Activated CD4-positive, alpha-beta T cell treated with anti-CD3 and anti-CD28 coated beads for 36 hours (primary cell): ENCODE measurements at regions of chr17 and their contacts with region 1.

Region 1: GRCh38 chr17:781805-782731 is at the starts of genes GLOD4 and MRM3:
- DNase-seq: peak; percentile 96
- ATAC-seq: peak; percentile 89
- H3K4me3 Mint-ChIP-seq: peak within 1 kb of the TSS; percentile 97
- H3K27ac Mint-ChIP-seq: peak within 1 kb of the TSS; percentile 96
- H3K4me1 Mint-ChIP-seq: peaks cover 35% of the 10 kb centered on the region
- H3K27me3 Mint-ChIP-seq: no peaks in the 10 kb centered on the region
- total RNA-seq, gene GLOD4: 59.5 to 64.0 TPM
- total RNA-seq, gene MRM3: 20.6 to 31.4 TPM

Region 2: GRCh38 chr17:716238-716637 is 65.8 kb before region 1 on chr17:
- CTCF ChIA-PET with region 1: interaction called, 3 read pairs
- POLR2A ChIA-PET with region 1: no interaction called
- intact Hi-C with region 1: loop called in 1 of 2 experiments (anchors 1 kb)
- DNase-seq: no peak
- ATAC-seq: no peak
- H3K4me3 Mint-ChIP-seq: no peak overlapping the region
- H3K27ac Mint-ChIP-seq: no peak overlapping the region
- H3K4me1 Mint-ChIP-seq: peaks cover 26% of the 10 kb centered on the region
- H3K27me3 Mint-ChIP-seq: no peaks in the 10 kb centered on the region